ENCODE measurements at regions of chr21 and their contacts with region 1.

Region 1: DNA sequence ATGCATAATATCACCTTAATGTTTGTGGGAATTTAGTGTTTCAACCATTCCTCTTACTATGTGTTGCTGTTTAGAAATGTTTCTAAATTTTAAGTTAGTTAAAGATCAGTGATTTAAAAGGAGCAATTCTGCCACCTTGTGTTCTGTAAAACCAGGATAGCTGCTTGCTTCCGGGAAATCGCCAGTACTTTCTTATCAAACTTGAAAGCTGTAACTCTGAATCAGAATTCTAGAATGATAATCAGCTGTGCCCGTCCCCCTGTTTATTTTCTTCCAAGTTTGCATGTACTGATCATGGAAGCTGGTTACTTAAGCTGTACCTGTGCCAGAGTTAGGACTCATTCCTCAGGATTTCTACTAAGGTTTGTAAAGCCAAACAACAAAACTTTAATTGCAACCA is 656.4 kb downstream of the LTN1 start:
- DNase-seq: peak; percentile 96
- ATAC-seq: peak; percentile 66
- H3K4me3 ChIP-seq: no peak overlapping the region
- H3K27ac ChIP-seq: peak overlapping the region; percentile 74; the same call in 1 of the 2 replicates
- H3K4me1 ChIP-seq: peaks cover 11% of the 10 kb centered on the region
- H3K27me3 ChIP-seq: no peaks in the 10 kb centered on the region
- CTCF ChIP-seq: peak; percentile 71
- POLR2A ChIP-seq: no peak
- RAD21 ChIP-seq: peak; percentile 76

Region 2: DNA sequence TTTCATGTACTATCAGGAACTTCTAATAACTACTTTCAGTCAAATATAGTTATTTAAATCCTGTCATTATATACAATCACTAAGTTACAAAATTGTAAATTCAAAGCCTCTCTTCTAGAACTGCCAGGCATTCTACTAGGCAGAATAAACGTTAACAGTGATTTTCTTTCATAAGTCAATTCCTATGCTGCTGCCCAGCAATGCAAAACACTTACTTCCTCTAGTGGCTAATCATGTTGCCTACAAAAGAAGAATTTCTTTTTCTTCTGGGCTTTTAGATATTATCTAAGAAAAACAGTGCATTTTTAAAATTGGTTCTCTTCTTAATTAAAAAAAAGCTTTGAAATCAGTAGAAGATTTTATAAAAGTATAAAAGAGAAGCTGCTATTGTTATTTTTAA is 859.6 kb before region 1 on chr21:
- CTCF ChIA-PET with region 1: no interaction called
- POLR2A ChIA-PET with region 1: no interaction called
- dilution Hi-C with region 1: no loop called
- in situ Hi-C with region 1: no loop called
- intact Hi-C with region 1: loop called (anchors 5 kb)
- DNase-seq: peak; percentile 62
- ATAC-seq: peak; percentile 83
- H3K4me3 ChIP-seq: no peak overlapping the region
- H3K27ac ChIP-seq: no peak overlapping the region
- H3K4me1 ChIP-seq: peaks cover 6% of the 10 kb centered on the region
- H3K27me3 ChIP-seq: no peaks in the 10 kb centered on the region
- CTCF ChIP-seq: peak; percentile 61
- POLR2A ChIP-seq: no peak
- RAD21 ChIP-seq: peak; percentile 74

Region 3: GRCh38 chr21:28063241-28064216 is 272.8 kb before region 1 on chr21:
- CTCF ChIA-PET with region 1: interaction called, 4 read pairs
- POLR2A ChIA-PET with region 1: no interaction called
- dilution Hi-C with region 1: no loop called
- in situ Hi-C with region 1: loop called (anchors 10 kb)
- intact Hi-C with region 1: loop called (anchors 5 kb)
- DNase-seq: no peak
- ATAC-seq: no peak
- H3K4me3 ChIP-seq: no peak overlapping the region
- H3K27ac ChIP-seq: no peak overlapping the region
- H3K4me1 ChIP-seq: peaks cover 7% of the 10 kb centered on the region
- H3K27me3 ChIP-seq: no peaks in the 10 kb centered on the region
- CTCF ChIP-seq: no peak
- POLR2A ChIP-seq: no peak
- RAD21 ChIP-seq: no peak

Region 4: GRCh38 chr21:28127175-28127785 is 209.0 kb before region 1 on chr21:
- CTCF ChIA-PET with region 1: no interaction called
- POLR2A ChIA-PET with region 1: no interaction called
- dilution Hi-C with region 1: no loop called
- in situ Hi-C with region 1: no loop called
- intact Hi-C with region 1: loop called (anchors 5 kb)
- DNase-seq: peak; percentile 7
- ATAC-seq: no peak
- H3K4me3 ChIP-seq: no peak overlapping the region
- H3K27ac ChIP-seq: peak overlapping the region; percentile 98; the same call in 1 of the 2 replicates
- H3K4me1 ChIP-seq: peaks cover 4% of the 10 kb centered on the region
- H3K27me3 ChIP-seq: no peaks in the 10 kb centered on the region
- CTCF ChIP-seq: no peak
- POLR2A ChIP-seq: no peak
- RAD21 ChIP-seq: no peak

Region 5: GRCh38 chr21:28427394-28428022 is 91.2 kb after region 1 on chr21:
- CTCF ChIA-PET with region 1: no interaction called
- POLR2A ChIA-PET with region 1: no interaction called
- dilution Hi-C with region 1: no loop called
- in situ Hi-C with region 1: no loop called
- intact Hi-C with region 1: loop called (anchors 5 kb)
- DNase-seq: peak; percentile 67
- ATAC-seq: peak; percentile 62
- H3K4me3 ChIP-seq: no peak overlapping the region
- H3K27ac ChIP-seq: peak overlapping the region; percentile 34; the same call in 1 of the 2 replicates
- H3K4me1 ChIP-seq: peaks cover 21% of the 10 kb centered on the region; the same call in 1 of the 2 replicates
- H3K27me3 ChIP-seq: no peaks in the 10 kb centered on the region
- CTCF ChIP-seq: no peak
- POLR2A ChIP-seq: no peak
- RAD21 ChIP-seq: no peak

Region 6: DNA sequence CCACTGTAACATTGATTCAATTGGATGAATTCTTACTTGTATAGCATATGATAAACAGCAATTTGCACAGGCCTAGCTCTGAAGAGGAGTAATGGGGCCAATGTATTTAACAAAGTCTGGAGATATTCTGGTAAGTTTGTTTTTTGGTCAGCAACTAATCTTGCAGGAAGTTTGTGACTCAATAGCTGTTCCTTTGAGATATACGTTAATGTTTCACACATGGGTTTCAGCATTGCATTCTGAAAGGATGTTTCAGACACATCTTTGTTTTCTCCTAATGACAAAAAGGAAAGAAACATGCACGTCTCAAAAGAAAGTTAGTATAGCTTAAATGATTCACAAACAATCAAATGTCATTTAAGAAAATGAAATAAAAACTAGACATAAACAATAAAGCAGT is 607.3 kb after region 1 on chr21:
- CTCF ChIA-PET with region 1: no interaction called
- POLR2A ChIA-PET with region 1: no interaction called
- dilution Hi-C with region 1: no loop called
- in situ Hi-C with region 1: loop called (anchors 10 kb)
- intact Hi-C with region 1: loop called (anchors 2 kb)
- DNase-seq: peak; percentile 28
- ATAC-seq: no peak; the same call in 1 of the 2 replicates
- H3K4me3 ChIP-seq: no peak overlapping the region
- H3K27ac ChIP-seq: no peak overlapping the region
- H3K4me1 ChIP-seq: no peaks in the 10 kb centered on the region
- H3K27me3 ChIP-seq: no peaks in the 10 kb centered on the region
- CTCF ChIP-seq: no peak
- POLR2A ChIP-seq: no peak
- RAD21 ChIP-seq: no peak